ENCODE measurements at regions of chr11 and their contacts with region 1.

Region 1: GRCh38 chr11:86174101-86175046 is 70.2 kb upstream of the EED start:
- DNase-seq: peak; percentile 76 to 87 (median 78)
- ATAC-seq: peak; percentile 45
- H3K4me3 ChIP-seq: no peak overlapping the region
- H3K27ac ChIP-seq: peak overlapping the region; percentile 81
- H3K4me1 ChIP-seq: peaks cover 54 to 76% of the 10 kb centered on the region in 2 experiments
- H3K27me3 ChIP-seq: no peaks in the 10 kb centered on the region; a peak in 1 of 5 replicates
- CTCF ChIP-seq: no peak
- EP300 ChIP-seq: peak; percentile 90
- POLR2A ChIP-seq: no peak; the same call in 1 of the 2 replicates
- RAD21 ChIP-seq: no peak

Region 2: GRCh38 chr11:86143087-86144030 is 31.0 kb before region 1 on chr11:
- CTCF ChIA-PET with region 1: no interaction called
- POLR2A ChIA-PET with region 1: interaction called, 6 read pairs
- in situ Hi-C with region 1: no loop called
- intact Hi-C with region 1: loop called (anchors 2 kb)
- DNase-seq: peak in 3 of 4 experiments; percentile 40 to 92 (median 81)
- ATAC-seq: peak; percentile 75
- H3K4me3 ChIP-seq: no peak overlapping the region
- H3K27ac ChIP-seq: peak overlapping the region; percentile 81
- H3K4me1 ChIP-seq: peaks cover 27 to 91% of the 10 kb centered on the region in 2 experiments
- H3K27me3 ChIP-seq: no peaks in the 10 kb centered on the region; a peak in 1 of 5 replicates
- CTCF ChIP-seq: no peak
- EP300 ChIP-seq: peak; percentile 99
- POLR2A ChIP-seq: no peak
- RAD21 ChIP-seq: peak; percentile 10 to 30; a peak in 3 of 4 replicates

Region 3: GRCh38 chr11:86162239-86162638 is 12.1 kb before region 1 on chr11:
- CTCF ChIA-PET with region 1: no interaction called
- POLR2A ChIA-PET with region 1: interaction called, 14 read pairs
- in situ Hi-C with region 1: no loop called
- intact Hi-C with region 1: loop called (anchors 2 kb)
- DNase-seq: peak in 3 of 4 experiments; percentile 41 to 67 (median 50)
- ATAC-seq: peak; percentile 33
- H3K4me3 ChIP-seq: no peak overlapping the region
- H3K27ac ChIP-seq: peak overlapping the region; percentile 80
- H3K4me1 ChIP-seq: peaks cover 32 to 78% of the 10 kb centered on the region in 2 experiments
- H3K27me3 ChIP-seq: no peaks in the 10 kb centered on the region
- CTCF ChIP-seq: no peak
- EP300 ChIP-seq: no peak
- POLR2A ChIP-seq: no peak
- RAD21 ChIP-seq: no peak